T-cell (primary cell): ENCODE measurements at regions of chr5 and their contacts with region 1.

Region 1: DNA sequence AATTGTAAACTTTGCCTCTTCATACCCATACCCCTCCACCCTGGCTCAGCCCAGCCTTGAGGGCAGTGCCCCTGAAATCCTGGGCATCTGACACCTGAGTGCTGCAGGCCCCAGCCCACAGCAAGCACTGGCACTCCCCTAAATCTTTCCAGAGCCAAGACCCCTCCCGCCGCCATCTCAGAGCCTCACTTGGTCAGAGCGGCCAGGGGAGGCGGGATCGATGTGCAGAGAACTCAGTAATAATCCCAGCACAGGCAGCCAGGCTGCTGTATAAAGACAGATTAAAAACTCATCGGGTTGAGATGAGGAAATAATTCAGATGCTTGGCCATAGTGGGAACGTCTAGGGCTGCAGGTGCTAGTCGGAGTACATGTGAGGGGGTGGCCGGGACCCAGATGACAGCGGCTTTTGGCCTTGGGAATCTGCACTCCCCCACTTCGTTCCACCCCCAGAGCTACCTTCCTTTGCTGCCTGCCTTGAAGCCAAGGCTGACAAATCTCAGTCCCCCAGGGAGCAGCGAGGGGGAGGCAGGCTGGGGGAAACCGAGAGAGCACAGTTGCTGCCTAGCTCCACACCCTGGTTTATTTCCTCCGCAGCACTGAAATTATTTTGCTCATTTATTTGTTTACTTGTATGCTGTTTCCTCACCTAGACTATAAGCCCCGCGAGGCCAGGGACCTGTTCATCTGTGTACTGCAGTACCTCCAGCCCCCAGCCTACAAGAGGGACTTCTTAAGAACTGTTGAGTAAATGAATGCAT is 19.5 kb upstream of the ARAP3 start:
- DNase-seq: no peak
- ATAC-seq: peak; percentile 7 to 40 (median 20)
- H3K4me3 ChIP-seq: peak overlapping the region; percentile 52 to 63
- H3K4me3 Mint-ChIP-seq: peak overlapping the region in 1 of 3 donors; percentile 76
- H3K27ac ChIP-seq: no peak overlapping the region
- H3K27ac Mint-ChIP-seq: no peak overlapping the region
- H3K4me1 ChIP-seq: peaks cover 6 to 24% of the 10 kb centered on the region in 2 experiments
- H3K4me1 Mint-ChIP-seq: peaks cover 8 to 22% (median 15%) of the 10 kb centered on the region in 3 donors
- H3K27me3 ChIP-seq: peaks cover 22 to 51% of the 10 kb centered on the region in 2 experiments
- H3K27me3 Mint-ChIP-seq: peaks cover 33 to 38% of the 10 kb centered on the region in 2 donors

Region 2: GRCh38 chr5:141412854-141413539 is 288.5 kb before region 1 on chr5 and contains the start of gene PCDHGA10:
- CTCF ChIA-PET with region 1: no interaction called
- POLR2A ChIA-PET with region 1: no interaction called
- DNase-seq: peak in 32 of 35 experiments; percentile 15 to 69 (median 46)
- ATAC-seq: peak; percentile 78 to 84 (median 82)
- H3K4me3 ChIP-seq: peak within 1 kb of the TSS; percentile 41 to 68
- H3K4me3 Mint-ChIP-seq: peak within 1 kb of the TSS; percentile 77 to 85 (median 78)
- H3K27ac ChIP-seq: no peak within 1 kb of the TSS
- H3K27ac Mint-ChIP-seq: peak within 1 kb of the TSS; percentile 34
- H3K4me1 ChIP-seq: peaks cover 0 to 18% of the 10 kb centered on the region in 2 experiments
- H3K4me1 Mint-ChIP-seq: peaks cover 22 to 35% (median 23%) of the 10 kb centered on the region in 3 donors
- H3K27me3 ChIP-seq: peaks cover 15 to 63% of the 10 kb centered on the region in 2 experiments
- H3K27me3 Mint-ChIP-seq: peaks cover 57 to 80% of the 10 kb centered on the region in 2 donors
- total RNA-seq, gene PCDHGA10: 0.10 to 0.53 (median 0.32) TPM

Region 3: GRCh38 chr5:141976176-141976575 is 274.6 kb after region 1 on chr5:
- CTCF ChIA-PET with region 1: interaction called in 1 of 2 experiments, 11 read pairs
- POLR2A ChIA-PET with region 1: no interaction called
- DNase-seq: no peak
- ATAC-seq: no peak
- H3K4me3 ChIP-seq: no peak overlapping the region
- H3K4me3 Mint-ChIP-seq: no peak overlapping the region
- H3K27ac ChIP-seq: no peak overlapping the region
- H3K27ac Mint-ChIP-seq: no peak overlapping the region
- H3K4me1 ChIP-seq: peaks cover 0 to 2% of the 10 kb centered on the region in 2 experiments
- H3K4me1 Mint-ChIP-seq: peaks cover 18 to 34% (median 26%) of the 10 kb centered on the region in 3 donors
- H3K27me3 ChIP-seq: no peaks in the 10 kb centered on the region
- H3K27me3 Mint-ChIP-seq: no peaks in the 10 kb centered on the region